Right cardiac atrium (tissue), 5 donors: ENCODE measurements at regions of chr20 and their contacts with region 1.

Region 1: GRCh38 chr20:815914-816606 is 17.5 kb upstream of the FAM110A start:
- DNase-seq: peak; percentile 43 to 82 (median 76)
- ATAC-seq: peak; percentile 40 to 57
- H3K4me3 ChIP-seq: no peak overlapping the region
- H3K27ac ChIP-seq: no peak overlapping the region
- H3K4me1 ChIP-seq: no peaks in the 10 kb centered on the region
- H3K27me3 ChIP-seq: no peaks in the 10 kb centered on the region

Region 2: DNA sequence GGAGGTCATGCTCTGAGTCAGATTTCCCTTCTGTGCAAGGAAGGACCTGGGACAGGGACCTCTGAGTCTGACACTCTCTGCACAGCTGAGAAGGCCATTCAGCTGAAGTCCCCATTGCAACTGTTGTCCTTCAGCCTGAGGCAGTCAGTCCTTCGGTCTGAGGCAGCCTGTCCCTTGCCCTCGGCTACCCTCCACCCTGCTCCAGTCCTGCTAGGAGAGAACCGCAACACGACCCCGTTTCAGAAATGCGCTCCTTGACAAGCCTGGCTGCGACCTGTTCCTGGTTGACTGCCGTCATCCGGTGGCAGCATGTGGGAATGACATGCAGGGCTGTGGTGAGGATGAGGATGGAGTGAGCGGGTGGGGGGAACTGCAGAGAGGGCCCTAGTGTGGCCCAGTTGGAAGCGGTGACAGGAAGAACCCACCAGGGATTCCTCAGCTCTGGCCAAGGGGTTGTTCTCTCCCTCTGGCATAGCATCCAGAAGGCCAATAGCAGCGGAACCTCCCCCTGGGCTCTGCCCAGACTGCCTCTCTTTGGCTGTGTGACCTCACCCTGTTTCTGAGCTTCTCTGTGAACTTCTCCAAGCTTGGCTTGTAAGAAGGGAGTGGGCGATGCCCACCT is 140.4 kb after region 1 on chr20:
- intact Hi-C with region 1: loop called (anchors 1 to 5 kb)
- DNase-seq: peak; percentile 57 to 87 (median 86)
- ATAC-seq: peak; percentile 75 to 78
- H3K4me3 ChIP-seq: no peak overlapping the region
- H3K27ac ChIP-seq: no peak overlapping the region
- H3K4me1 ChIP-seq: peaks cover 1% of the 10 kb centered on the region
- H3K27me3 ChIP-seq: no peaks in the 10 kb centered on the region

Region 3: GRCh38 chr20:1108437-1108920 is 292.4 kb after region 1 on chr20:
- intact Hi-C with region 1: loop called in 3 of 4 experiments (anchors 5 kb)
- DNase-seq: peak; percentile 52 to 77 (median 77)
- ATAC-seq: peak; percentile 51 to 80
- H3K4me3 ChIP-seq: no peak overlapping the region
- H3K27ac ChIP-seq: no peak overlapping the region
- H3K4me1 ChIP-seq: no peaks in the 10 kb centered on the region
- H3K27me3 ChIP-seq: no peaks in the 10 kb centered on the region

Region 4: DNA sequence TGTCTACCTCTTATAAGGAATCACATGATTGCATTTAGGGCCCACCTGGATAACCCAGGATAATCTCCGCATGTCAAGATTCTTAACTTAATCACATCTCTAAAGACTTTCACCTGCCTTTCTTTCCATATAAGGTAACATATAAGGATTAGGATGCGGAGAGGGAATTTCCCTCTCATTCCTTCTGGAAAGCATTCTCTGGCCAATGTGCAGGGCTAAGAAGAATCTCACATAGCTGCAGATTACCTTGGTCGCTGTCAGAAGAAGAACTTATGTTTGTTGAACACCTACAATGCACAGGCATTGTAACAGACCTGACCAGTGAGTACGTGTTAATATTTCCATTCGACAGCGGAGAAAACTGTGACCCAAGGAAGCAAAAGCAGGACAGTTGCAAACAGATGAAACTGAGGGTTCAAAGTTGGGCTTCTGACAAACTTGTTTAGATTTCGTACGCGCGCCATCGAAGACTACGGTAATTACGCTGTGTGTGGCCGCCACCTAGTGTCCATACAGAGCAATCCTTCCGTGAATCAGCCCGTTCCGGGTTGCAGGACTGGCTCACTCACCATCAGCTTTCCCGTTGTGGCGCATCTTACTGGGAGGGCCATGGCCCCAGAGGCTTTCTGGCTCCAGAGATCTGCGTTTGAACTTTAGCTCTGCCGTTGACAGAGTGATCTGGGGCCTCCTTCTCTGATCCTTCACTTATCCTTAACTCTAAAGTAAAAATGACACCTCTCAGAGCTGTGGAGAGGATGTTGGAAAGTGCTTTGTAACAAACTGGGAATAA is 396.7 kb after region 1 on chr20:
- intact Hi-C with region 1: loop called in 2 of 4 experiments (anchors 5 to 10 kb)
- DNase-seq: peak; percentile 66 to 84 (median 78)
- ATAC-seq: peak; percentile 85 to 91
- H3K4me3 ChIP-seq: no peak overlapping the region
- H3K27ac ChIP-seq: no peak overlapping the region
- H3K4me1 ChIP-seq: no peaks in the 10 kb centered on the region
- H3K27me3 ChIP-seq: no peaks in the 10 kb centered on the region

Region 5: DNA sequence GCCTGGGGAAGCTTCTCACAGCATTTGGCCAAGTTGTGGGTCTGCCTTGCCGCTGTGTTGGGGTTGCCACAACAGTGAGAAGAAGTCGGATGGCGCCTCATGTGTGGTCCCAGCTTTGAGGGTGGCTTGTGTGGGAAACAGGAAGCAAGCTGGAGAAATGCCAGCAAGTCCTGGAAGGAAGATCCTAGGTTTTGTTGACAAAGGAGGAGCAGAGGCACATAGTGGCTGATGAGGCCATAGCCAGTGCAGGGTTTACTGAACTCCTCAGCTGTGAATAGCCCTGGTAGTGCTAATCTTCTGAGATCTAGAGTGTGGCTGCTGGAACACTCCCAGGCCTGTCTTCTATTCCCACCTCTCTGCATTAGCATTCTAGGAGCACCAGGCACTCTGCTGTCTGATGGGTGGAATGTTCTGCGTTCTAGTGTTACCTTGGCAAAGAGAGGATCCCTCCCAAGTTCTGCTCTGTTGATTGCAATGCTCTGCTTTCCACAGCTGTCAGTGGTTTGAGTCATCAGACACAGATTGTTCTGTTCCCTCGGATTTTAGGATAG is 475.2 kb after region 1 on chr20:
- intact Hi-C with region 1: no loop called
- DNase-seq: no peak
- ATAC-seq: no peak
- H3K4me3 ChIP-seq: no peak overlapping the region
- H3K27ac ChIP-seq: no peak overlapping the region
- H3K4me1 ChIP-seq: no peaks in the 10 kb centered on the region
- H3K27me3 ChIP-seq: no peaks in the 10 kb centered on the region